Activated naive CD8-positive, alpha-beta T cell treated with anti-CD3 and anti-CD28 coated beads, Interleukin-2, amount 10 ng/mL, durations not matched to agents 7 days and 5 days (primary cell): ENCODE measurements at regions of chr13 and their contacts with region 1.

Region 1: GRCh38 chr13:28718543-28719226 is at the start of gene SLC46A3:
- DNase-seq: peak; percentile 96
- ATAC-seq: peak; percentile 100
- H3K4me3 Mint-ChIP-seq: peak within 1 kb of the TSS; percentile 87
- H3K27ac Mint-ChIP-seq: peak within 1 kb of the TSS; percentile 91
- H3K4me1 Mint-ChIP-seq: peaks cover 20% of the 10 kb centered on the region
- H3K27me3 Mint-ChIP-seq: peaks cover 5% of the 10 kb centered on the region
- total RNA-seq, gene SLC46A3: 14.2 to 16.7 TPM

Region 2: GRCh38 chr13:28658796-28659620 is 59.7 kb before region 1 on chr13 and contains the start of gene POMP:
- POLR2A ChIA-PET with region 1: interaction called, 11 read pairs
- DNase-seq: peak; percentile 94
- ATAC-seq: peak; percentile 91
- H3K4me3 Mint-ChIP-seq: peak within 1 kb of the TSS; percentile 98
- H3K27ac Mint-ChIP-seq: peak within 1 kb of the TSS; percentile 95
- H3K4me1 Mint-ChIP-seq: peaks cover 43% of the 10 kb centered on the region
- H3K27me3 Mint-ChIP-seq: no peaks in the 10 kb centered on the region
- total RNA-seq, gene POMP: 55.4 to 59.3 TPM

Region 3: DNA sequence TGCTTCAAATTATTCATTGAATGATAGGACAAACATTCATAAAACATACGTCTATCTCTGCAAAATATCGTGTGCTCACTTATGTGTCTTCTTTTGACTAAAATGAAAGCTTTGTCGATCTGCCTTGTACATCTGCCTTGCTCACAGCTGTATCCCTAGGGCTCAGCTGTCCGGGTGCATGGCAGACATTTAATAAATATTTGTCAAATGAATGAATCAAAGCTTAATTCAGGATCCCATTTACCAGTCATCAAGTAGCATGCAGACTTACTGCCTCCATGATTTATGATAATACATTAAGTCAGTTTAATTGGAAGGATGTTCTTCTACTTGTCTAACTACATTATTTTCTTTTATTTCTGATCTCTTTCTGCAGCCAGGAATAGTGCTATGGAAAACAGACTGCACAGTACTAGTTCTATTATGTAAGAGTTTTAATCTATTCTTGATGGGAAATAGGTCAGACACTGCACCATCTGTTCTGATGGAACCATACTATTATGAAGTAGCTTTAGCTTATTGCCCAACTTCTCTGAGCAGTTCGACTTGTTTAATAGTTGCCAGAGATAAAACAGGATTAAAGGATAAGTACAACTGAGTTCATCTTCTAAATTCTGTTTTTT is 13.1 kb before region 1 on chr13:
- POLR2A ChIA-PET with region 1: no interaction called
- DNase-seq: no peak
- ATAC-seq: no peak
- H3K4me3 Mint-ChIP-seq: no peak overlapping the region
- H3K27ac Mint-ChIP-seq: no peak overlapping the region
- H3K4me1 Mint-ChIP-seq: peaks cover 8% of the 10 kb centered on the region
- H3K27me3 Mint-ChIP-seq: no peaks in the 10 kb centered on the region